ENCODE measurements at regions of chr6 and their contacts with region 1.

Region 1: GRCh38 chr6:28838634-28839442 is 84.9 kb downstream of the TRIM27 start:
- DNase-seq: peak; percentile 74 to 82 (median 76)
- H3K4me3 ChIP-seq: peak overlapping the region; percentile 72 to 80
- H3K4me3 Mint-ChIP-seq: peak overlapping the region; percentile 91 to 97 (median 94)
- H3K27ac ChIP-seq: peak overlapping the region; percentile 42
- H3K27ac Mint-ChIP-seq: peak overlapping the region; percentile 70 to 100 (median 92)
- H3K4me1 ChIP-seq: peaks cover 13% of the 10 kb centered on the region
- H3K4me1 Mint-ChIP-seq: peaks cover 12 to 24% (median 18%) of the 10 kb centered on the region in 4 donors
- H3K27me3 ChIP-seq: no peaks in the 10 kb centered on the region
- H3K27me3 Mint-ChIP-seq: peaks cover 22 to 28% of the 10 kb centered on the region in 2 donors

Region 2: GRCh38 chr6:28657769-28658465 is 180.9 kb before region 1 on chr6:
- CTCF ChIA-PET with region 1: no interaction called
- POLR2A ChIA-PET with region 1: no interaction called
- intact Hi-C with region 1: no loop called
- DNase-seq: peak; percentile 21 to 56 (median 37)
- H3K4me3 ChIP-seq: no peak overlapping the region
- H3K4me3 Mint-ChIP-seq: peak overlapping the region; percentile 63 to 85 (median 73)
- H3K27ac ChIP-seq: no peak overlapping the region
- H3K27ac Mint-ChIP-seq: peak overlapping the region in 3 of 7 donors; percentile 25 to 82 (median 59)
- H3K4me1 ChIP-seq: peaks cover 20% of the 10 kb centered on the region
- H3K4me1 Mint-ChIP-seq: peaks cover 10 to 22% (median 18%) of the 10 kb centered on the region in 4 donors
- H3K27me3 ChIP-seq: peaks cover 33% of the 10 kb centered on the region
- H3K27me3 Mint-ChIP-seq: peaks cover 43 to 50% of the 10 kb centered on the region in 2 donors

Region 3: GRCh38 chr6:28856620-28857005 is 17.8 kb after region 1 on chr6:
- CTCF ChIA-PET with region 1: interaction called, 65 read pairs
- POLR2A ChIA-PET with region 1: interaction called, 3 read pairs
- intact Hi-C with region 1: no loop called
- DNase-seq: no peak
- H3K4me3 ChIP-seq: no peak overlapping the region
- H3K4me3 Mint-ChIP-seq: no peak overlapping the region
- H3K27ac ChIP-seq: no peak overlapping the region
- H3K27ac Mint-ChIP-seq: no peak overlapping the region
- H3K4me1 ChIP-seq: no peaks in the 10 kb centered on the region
- H3K4me1 Mint-ChIP-seq: peaks cover 0 to 8% (median 2%) of the 10 kb centered on the region in 4 donors
- H3K27me3 ChIP-seq: no peaks in the 10 kb centered on the region
- H3K27me3 Mint-ChIP-seq: peaks cover under 1 to 2% of the 10 kb centered on the region in 2 donors

Region 4: GRCh38 chr6:28895134-28895812 is 56.4 kb after region 1 on chr6:
- CTCF ChIA-PET with region 1: interaction called, 42 read pairs
- POLR2A ChIA-PET with region 1: interaction called, 28 read pairs
- intact Hi-C with region 1: loop called (anchors 1 kb)
- DNase-seq: peak; percentile 90 to 94 (median 93)
- H3K4me3 ChIP-seq: peak overlapping the region; percentile 90 to 97
- H3K4me3 Mint-ChIP-seq: peak overlapping the region; percentile 94 to 99 (median 98)
- H3K27ac ChIP-seq: peak overlapping the region; percentile 96
- H3K27ac Mint-ChIP-seq: peak overlapping the region; percentile 97 to 100 (median 100)
- H3K4me1 ChIP-seq: peaks cover 17% of the 10 kb centered on the region
- H3K4me1 Mint-ChIP-seq: peaks cover 4 to 24% (median 18%) of the 10 kb centered on the region in 4 donors
- H3K27me3 ChIP-seq: no peaks in the 10 kb centered on the region
- H3K27me3 Mint-ChIP-seq: peaks cover 2 to 6% of the 10 kb centered on the region in 2 donors

Region 5: GRCh38 chr6:28981833-28982475 is 143.1 kb after region 1 on chr6:
- CTCF ChIA-PET with region 1: interaction called, 33 read pairs
- POLR2A ChIA-PET with region 1: interaction called, 8 read pairs
- intact Hi-C with region 1: loop called (anchors 1 kb)
- DNase-seq: peak; percentile 79 to 87 (median 84)
- H3K4me3 ChIP-seq: peak overlapping the region; percentile 99
- H3K4me3 Mint-ChIP-seq: peak overlapping the region; percentile 87 to 95 (median 94)
- H3K27ac ChIP-seq: no peak overlapping the region
- H3K27ac Mint-ChIP-seq: peak overlapping the region; percentile 84 to 100 (median 95)
- H3K4me1 ChIP-seq: peaks cover 28% of the 10 kb centered on the region
- H3K4me1 Mint-ChIP-seq: peaks cover 37 to 65% (median 46%) of the 10 kb centered on the region in 4 donors
- H3K27me3 ChIP-seq: no peaks in the 10 kb centered on the region
- H3K27me3 Mint-ChIP-seq: peaks cover 14 to 24% of the 10 kb centered on the region in 2 donors

Region 6: DNA sequence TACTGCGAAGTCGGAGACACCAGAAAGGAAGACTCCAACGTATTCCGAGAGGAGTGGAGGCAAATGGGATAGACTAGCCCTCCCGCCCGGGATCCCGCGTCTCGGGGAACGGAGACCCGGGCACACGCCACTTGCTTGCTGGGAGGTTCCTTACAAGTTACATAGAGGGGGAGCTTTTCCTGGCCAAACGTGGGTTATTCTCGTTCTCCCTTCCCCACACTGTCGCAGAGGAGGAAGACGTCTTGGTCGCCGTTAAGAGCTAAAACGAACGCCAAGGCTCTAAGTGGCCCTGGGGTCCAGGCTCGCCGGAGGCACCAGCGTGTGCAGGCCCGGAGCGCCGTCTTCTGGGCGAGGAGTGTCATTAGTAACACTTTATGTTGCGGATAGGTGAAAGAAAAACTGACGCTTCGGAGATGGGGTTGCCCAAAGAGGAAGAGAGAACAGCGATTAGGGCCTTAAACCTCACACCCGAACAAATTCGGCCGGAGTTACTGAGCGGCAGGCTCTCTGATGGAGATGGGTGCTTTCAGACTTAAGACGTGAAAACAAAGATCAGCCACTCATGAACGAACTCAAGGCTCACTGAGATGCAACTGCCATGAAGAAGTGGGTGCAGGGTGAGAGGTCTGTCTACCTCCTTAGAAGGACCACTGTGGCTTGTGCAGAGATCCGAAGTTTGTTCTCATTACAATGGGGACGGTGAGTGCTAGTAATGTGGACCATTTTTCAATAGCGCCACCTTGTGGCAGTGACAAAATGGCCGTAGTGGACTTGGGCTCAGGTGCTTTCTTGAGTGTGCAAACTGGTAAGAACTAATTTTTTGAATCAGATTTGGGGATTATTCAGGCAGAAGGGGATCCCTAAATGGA is 178.0 kb after region 1 on chr6:
- CTCF ChIA-PET with region 1: interaction called, 197 read pairs
- POLR2A ChIA-PET with region 1: interaction called, 32 read pairs
- intact Hi-C with region 1: loop called (anchors 1 kb)
- DNase-seq: peak; percentile 79 to 82 (median 81)
- H3K4me3 ChIP-seq: peak overlapping the region; percentile 55 to 58
- H3K4me3 Mint-ChIP-seq: peak overlapping the region; percentile 85 to 97 (median 90)
- H3K27ac ChIP-seq: peak overlapping the region; percentile 9
- H3K27ac Mint-ChIP-seq: peak overlapping the region; percentile 70 to 92 (median 82)
- H3K4me1 ChIP-seq: peaks cover 10% of the 10 kb centered on the region
- H3K4me1 Mint-ChIP-seq: peaks cover 10 to 21% (median 15%) of the 10 kb centered on the region in 4 donors
- H3K27me3 ChIP-seq: no peaks in the 10 kb centered on the region
- H3K27me3 Mint-ChIP-seq: peaks cover 7 to 11% of the 10 kb centered on the region in 2 donors

Measured in CD4-positive, alpha-beta memory T cell (primary cell).